ENCODE measurements at regions of chr3 and their contacts with region 1.

Region 1: GRCh38 chr3:161220850-161221753 is at the start of gene NMD3:
- DNase-seq: peak; percentile 84 to 92 (median 89)
- ATAC-seq: peak; percentile 98
- H3K4me3 ChIP-seq: peak within 1 kb of the TSS; percentile 86
- H3K4me3 Mint-ChIP-seq: peak within 1 kb of the TSS; percentile 87 to 96 (median 93)
- H3K27ac ChIP-seq: peak within 1 kb of the TSS; percentile 97
- H3K27ac Mint-ChIP-seq: peak within 1 kb of the TSS; percentile 89 to 98 (median 94)
- H3K4me1 ChIP-seq: peaks cover 18 to 21% of the 10 kb centered on the region in 2 donors
- H3K4me1 Mint-ChIP-seq: peaks cover 12 to 52% (median 36%) of the 10 kb centered on the region in 7 donors
- H3K27me3 ChIP-seq: no peaks in the 10 kb centered on the region
- H3K27me3 Mint-ChIP-seq: peaks cover 4 to 22% (median 11%) of the 10 kb centered on the region in 5 donors
- total RNA-seq, gene NMD3: 37.3 to 52.6 (median 40.7) TPM

Region 2: GRCh38 chr3:161104561-161105551 is 116.2 kb before region 1 on chr3 and contains the start of gene B3GALNT1:
- CTCF ChIA-PET with region 1: no interaction called
- POLR2A ChIA-PET with region 1: interaction called, 3 read pairs
- intact Hi-C with region 1: loop called in 1 of 2 experiments (anchors 5 kb)
- DNase-seq: peak in 7 of 9 donors; percentile 3 to 44 (median 13)
- ATAC-seq: peak; percentile 71
- H3K4me3 ChIP-seq: peak within 1 kb of the TSS; percentile 44
- H3K4me3 Mint-ChIP-seq: peak within 1 kb of the TSS; percentile 52 to 88 (median 76)
- H3K27ac ChIP-seq: no peak within 1 kb of the TSS
- H3K27ac Mint-ChIP-seq: peak within 1 kb of the TSS in 2 of 9 donors; percentile 35 to 36
- H3K4me1 ChIP-seq: no peaks in the 10 kb centered on the region
- H3K4me1 Mint-ChIP-seq: peaks cover 0 to 16% (median 8%) of the 10 kb centered on the region in 7 donors
- H3K27me3 ChIP-seq: no peaks in the 10 kb centered on the region
- H3K27me3 Mint-ChIP-seq: peaks cover 20 to 36% (median 30%) of the 10 kb centered on the region in 5 donors
- total RNA-seq, gene B3GALNT1: 0.42 to 8.1 (median 1.3) TPM

Region 3: GRCh38 chr3:161163297-161163696 is 57.8 kb before region 1 on chr3:
- CTCF ChIA-PET with region 1: no interaction called
- POLR2A ChIA-PET with region 1: no interaction called
- intact Hi-C with region 1: no loop called
- DNase-seq: no peak
- ATAC-seq: no peak
- H3K4me3 ChIP-seq: no peak overlapping the region
- H3K4me3 Mint-ChIP-seq: no peak overlapping the region
- H3K27ac ChIP-seq: no peak overlapping the region
- H3K27ac Mint-ChIP-seq: no peak overlapping the region
- H3K4me1 ChIP-seq: no peaks in the 10 kb centered on the region
- H3K4me1 Mint-ChIP-seq: peaks cover 0 to 2% (median 0%) of the 10 kb centered on the region in 7 donors
- H3K27me3 ChIP-seq: no peaks in the 10 kb centered on the region
- H3K27me3 Mint-ChIP-seq: peaks cover 0 to 12% (median 4%) of the 10 kb centered on the region in 5 donors